Naive thymus-derived CD8-positive, alpha-beta T cell (primary cell): ENCODE measurements at regions of chr17 and their contacts with region 1.

Region 1: DNA sequence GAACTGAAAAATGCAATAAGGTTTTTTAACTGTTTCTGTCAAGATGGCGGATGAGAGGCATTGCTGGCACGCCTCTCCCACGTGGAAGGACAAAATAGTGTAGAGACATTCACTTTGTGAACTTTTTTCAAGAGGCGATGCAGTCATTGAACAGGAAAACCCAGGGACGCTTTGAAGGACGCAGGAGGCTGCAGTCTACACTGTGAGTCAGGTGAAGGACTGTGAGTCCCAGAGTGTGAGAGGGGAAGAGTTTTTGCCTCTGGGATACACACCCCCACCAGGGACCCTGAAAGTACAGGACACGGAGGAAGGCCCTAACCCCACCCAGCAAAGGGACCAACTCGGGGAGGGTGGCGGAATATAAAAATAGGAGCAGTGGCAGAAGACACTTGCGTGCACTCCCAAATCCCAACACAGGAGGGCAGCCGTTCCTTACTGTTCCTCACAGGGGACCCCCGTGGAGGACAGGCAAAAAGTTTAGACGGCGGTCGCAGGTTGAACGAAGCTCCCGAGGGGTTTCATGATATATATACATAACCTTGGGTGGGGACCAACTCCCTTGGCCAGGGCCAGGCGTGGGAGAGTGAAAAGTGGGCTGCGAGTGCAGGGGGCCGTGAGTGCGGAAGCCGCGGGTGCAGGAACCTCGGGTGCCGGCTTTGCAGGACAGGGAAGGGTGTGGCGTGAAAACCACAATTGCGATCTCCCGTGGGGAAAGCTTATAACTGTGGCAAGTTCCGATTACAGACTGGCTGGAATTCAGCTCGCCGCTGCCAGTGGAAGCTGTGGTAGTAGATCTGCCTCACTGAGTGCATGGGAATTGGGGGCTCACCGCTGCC is 82.0 kb upstream of the ALOX12 start:
- DNase-seq: peak; percentile 69 to 90 (median 79)
- ATAC-seq: peak; percentile 86 to 89
- H3K4me3 Mint-ChIP-seq: peak overlapping the region; percentile 85 to 95 (median 91)
- H3K27ac Mint-ChIP-seq: peak overlapping the region in 8 of 10 donors; percentile 31 to 90 (median 78)
- H3K4me1 Mint-ChIP-seq: peaks cover 11 to 26% (median 17%) of the 10 kb centered on the region in 4 donors
- H3K27me3 Mint-ChIP-seq: peaks cover 3 to 12% (median 5%) of the 10 kb centered on the region in 5 donors

Region 2: GRCh38 chr17:7021993-7022778 is 108.4 kb after region 1 on chr17:
- POLR2A ChIA-PET with region 1: interaction called, 10 read pairs
- DNase-seq: peak; percentile 57 to 80 (median 74)
- ATAC-seq: peak; percentile 58 to 77
- H3K4me3 Mint-ChIP-seq: peak overlapping the region; percentile 36 to 84 (median 75)
- H3K27ac Mint-ChIP-seq: peak overlapping the region in 9 of 10 donors; percentile 37 to 93 (median 81)
- H3K4me1 Mint-ChIP-seq: peaks cover 32 to 69% (median 50%) of the 10 kb centered on the region in 4 donors
- H3K27me3 Mint-ChIP-seq: peaks cover 0 to 10% (median 0%) of the 10 kb centered on the region in 5 donors